CD4-positive, alpha-beta T cell (primary cell): ENCODE measurements at regions of chr15 and their contacts with region 1.

Region 1: GRCh38 chr15:69475769-69476358 is 23.2 kb downstream of the RPLP1 start:
- DNase-seq: peak; percentile 55 to 85 (median 70)
- ATAC-seq: peak; percentile 95
- H3K4me3 ChIP-seq: no peak overlapping the region
- H3K4me3 Mint-ChIP-seq: no peak overlapping the region
- H3K27ac ChIP-seq: no peak overlapping the region
- H3K27ac Mint-ChIP-seq: no peak overlapping the region
- H3K4me1 ChIP-seq: peaks cover 10% of the 10 kb centered on the region
- H3K4me1 Mint-ChIP-seq: peaks cover 3% of the 10 kb centered on the region
- H3K27me3 ChIP-seq: peaks cover 0 to 2% of the 10 kb centered on the region in 2 experiments
- H3K27me3 Mint-ChIP-seq: no peaks in the 10 kb centered on the region
- CTCF ChIP-seq: peak; percentile 97

Region 2: DNA sequence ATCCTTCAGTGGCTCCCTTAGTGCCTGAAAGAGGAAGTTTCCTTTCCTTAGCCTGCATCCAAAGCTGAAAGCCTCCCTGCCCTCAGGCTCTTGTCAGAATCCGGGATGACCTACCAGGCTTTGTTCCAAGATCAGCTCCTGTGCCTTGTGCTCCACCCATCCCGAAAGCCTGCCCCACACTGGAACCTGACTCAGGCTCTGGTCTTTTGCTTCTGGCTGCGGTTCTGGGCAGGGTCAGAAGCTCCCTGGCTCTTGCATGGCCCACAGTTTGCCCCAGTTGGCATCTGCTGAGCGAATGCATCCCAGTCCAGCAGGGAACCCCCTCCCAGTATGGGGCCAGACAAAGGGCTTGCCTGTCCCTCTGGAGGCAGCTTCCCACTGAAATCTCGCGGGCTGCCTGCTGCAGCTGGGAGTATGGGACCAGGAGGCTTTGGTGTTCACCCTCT is 87.6 kb before region 1 on chr15:
- CTCF ChIA-PET with region 1: no interaction called
- POLR2A ChIA-PET with region 1: no interaction called
- intact Hi-C with region 1: no loop called
- DNase-seq: no peak
- ATAC-seq: no peak
- H3K4me3 ChIP-seq: no peak overlapping the region
- H3K4me3 Mint-ChIP-seq: no peak overlapping the region
- H3K27ac ChIP-seq: no peak overlapping the region
- H3K27ac Mint-ChIP-seq: no peak overlapping the region
- H3K4me1 ChIP-seq: no peaks in the 10 kb centered on the region
- H3K4me1 Mint-ChIP-seq: no peaks in the 10 kb centered on the region
- H3K27me3 ChIP-seq: no peaks in the 10 kb centered on the region
- H3K27me3 Mint-ChIP-seq: no peaks in the 10 kb centered on the region
- CTCF ChIP-seq: no peak

Region 3: GRCh38 chr15:69443032-69443611 is 32.7 kb before region 1 on chr15:
- CTCF ChIA-PET with region 1: no interaction called
- POLR2A ChIA-PET with region 1: no interaction called
- intact Hi-C with region 1: no loop called
- DNase-seq: peak in 1 of 14 experiments; percentile 41
- ATAC-seq: no peak
- H3K4me3 ChIP-seq: no peak overlapping the region
- H3K4me3 Mint-ChIP-seq: no peak overlapping the region
- H3K27ac ChIP-seq: no peak overlapping the region
- H3K27ac Mint-ChIP-seq: no peak overlapping the region
- H3K4me1 ChIP-seq: peaks cover 5% of the 10 kb centered on the region
- H3K4me1 Mint-ChIP-seq: peaks cover 8% of the 10 kb centered on the region
- H3K27me3 ChIP-seq: no peaks in the 10 kb centered on the region
- H3K27me3 Mint-ChIP-seq: no peaks in the 10 kb centered on the region
- CTCF ChIP-seq: no peak

Region 4: DNA sequence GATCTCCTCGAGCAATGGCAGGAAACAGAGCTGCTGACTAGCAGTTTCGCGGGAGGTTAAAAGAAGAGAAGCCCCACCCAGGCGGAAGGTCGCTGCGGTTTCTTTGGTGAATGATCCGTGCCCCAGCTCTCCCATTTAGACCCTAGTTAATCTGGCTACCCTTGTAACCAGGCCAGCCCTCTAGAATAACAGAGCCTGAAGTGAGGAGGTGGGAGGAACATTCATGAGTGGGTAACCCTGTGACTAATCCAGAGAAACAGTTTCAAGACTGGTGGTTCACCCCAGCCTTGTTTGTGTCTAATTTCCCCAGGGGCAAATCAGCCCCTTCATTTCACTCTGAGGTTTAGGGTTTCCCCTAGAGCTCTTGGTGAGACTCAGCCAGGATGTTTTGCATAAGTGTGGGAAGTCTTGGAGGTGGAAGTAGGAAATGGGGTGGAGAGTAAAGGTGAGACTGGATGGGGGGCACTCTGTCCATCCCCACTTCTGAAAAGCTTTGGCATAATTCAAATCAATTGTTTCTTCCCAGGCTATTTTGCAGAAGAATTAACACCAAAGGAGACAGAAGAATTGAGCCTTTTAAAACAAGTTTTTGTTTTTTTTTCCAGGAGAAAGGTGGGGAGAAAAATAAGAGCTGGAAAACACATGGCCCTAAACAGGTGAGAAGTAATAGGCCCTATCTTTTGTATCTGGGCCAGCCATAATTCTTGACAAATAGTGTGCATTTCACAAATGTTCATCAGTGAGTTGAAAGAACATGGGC is 279.9 kb after region 1 on chr15:
- CTCF ChIA-PET with region 1: no interaction called
- POLR2A ChIA-PET with region 1: no interaction called
- intact Hi-C with region 1: loop called in 1 of 2 experiments (anchors 10 kb)
- DNase-seq: peak; percentile 29 to 88 (median 68)
- ATAC-seq: peak; percentile 57
- H3K4me3 ChIP-seq: peak overlapping the region; percentile 15
- H3K4me3 Mint-ChIP-seq: peak overlapping the region; percentile 73
- H3K27ac ChIP-seq: no peak overlapping the region
- H3K27ac Mint-ChIP-seq: peak overlapping the region; percentile 77
- H3K4me1 ChIP-seq: peaks cover 71% of the 10 kb centered on the region
- H3K4me1 Mint-ChIP-seq: peaks cover 94% of the 10 kb centered on the region
- H3K27me3 ChIP-seq: no peaks in the 10 kb centered on the region
- H3K27me3 Mint-ChIP-seq: peaks cover 6% of the 10 kb centered on the region
- CTCF ChIP-seq: no peak

Region 5: DNA sequence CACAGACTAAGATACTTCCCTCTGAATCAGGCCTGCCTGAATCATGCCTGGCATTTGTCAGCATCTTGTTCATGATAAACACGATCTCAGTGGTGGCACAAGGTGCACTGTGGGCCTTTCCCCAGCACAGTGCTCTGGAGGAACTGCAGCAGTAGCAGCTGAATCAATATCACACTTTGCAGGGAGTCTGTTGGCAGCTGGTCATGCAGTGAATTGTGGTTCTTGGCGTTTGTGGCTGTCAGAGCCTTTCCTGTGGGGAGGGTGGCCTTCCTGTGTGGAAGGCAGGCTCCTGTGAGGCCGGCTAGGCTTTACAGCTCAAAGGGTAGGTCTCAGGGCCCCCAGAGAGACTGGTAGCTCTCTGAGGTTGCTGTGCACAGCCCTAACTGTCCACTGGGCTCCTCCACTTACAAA is 676.2 kb after region 1 on chr15:
- CTCF ChIA-PET with region 1: no interaction called
- POLR2A ChIA-PET with region 1: no interaction called
- intact Hi-C with region 1: loop called in 1 of 2 experiments (anchors 5 kb)
- DNase-seq: peak in 2 of 14 experiments; percentile 26 to 47
- ATAC-seq: no peak
- H3K4me3 ChIP-seq: no peak overlapping the region
- H3K4me3 Mint-ChIP-seq: no peak overlapping the region
- H3K27ac ChIP-seq: no peak overlapping the region
- H3K27ac Mint-ChIP-seq: no peak overlapping the region
- H3K4me1 ChIP-seq: no peaks in the 10 kb centered on the region
- H3K4me1 Mint-ChIP-seq: no peaks in the 10 kb centered on the region
- H3K27me3 ChIP-seq: no peaks in the 10 kb centered on the region
- H3K27me3 Mint-ChIP-seq: no peaks in the 10 kb centered on the region
- CTCF ChIP-seq: no peak

Region 6: DNA sequence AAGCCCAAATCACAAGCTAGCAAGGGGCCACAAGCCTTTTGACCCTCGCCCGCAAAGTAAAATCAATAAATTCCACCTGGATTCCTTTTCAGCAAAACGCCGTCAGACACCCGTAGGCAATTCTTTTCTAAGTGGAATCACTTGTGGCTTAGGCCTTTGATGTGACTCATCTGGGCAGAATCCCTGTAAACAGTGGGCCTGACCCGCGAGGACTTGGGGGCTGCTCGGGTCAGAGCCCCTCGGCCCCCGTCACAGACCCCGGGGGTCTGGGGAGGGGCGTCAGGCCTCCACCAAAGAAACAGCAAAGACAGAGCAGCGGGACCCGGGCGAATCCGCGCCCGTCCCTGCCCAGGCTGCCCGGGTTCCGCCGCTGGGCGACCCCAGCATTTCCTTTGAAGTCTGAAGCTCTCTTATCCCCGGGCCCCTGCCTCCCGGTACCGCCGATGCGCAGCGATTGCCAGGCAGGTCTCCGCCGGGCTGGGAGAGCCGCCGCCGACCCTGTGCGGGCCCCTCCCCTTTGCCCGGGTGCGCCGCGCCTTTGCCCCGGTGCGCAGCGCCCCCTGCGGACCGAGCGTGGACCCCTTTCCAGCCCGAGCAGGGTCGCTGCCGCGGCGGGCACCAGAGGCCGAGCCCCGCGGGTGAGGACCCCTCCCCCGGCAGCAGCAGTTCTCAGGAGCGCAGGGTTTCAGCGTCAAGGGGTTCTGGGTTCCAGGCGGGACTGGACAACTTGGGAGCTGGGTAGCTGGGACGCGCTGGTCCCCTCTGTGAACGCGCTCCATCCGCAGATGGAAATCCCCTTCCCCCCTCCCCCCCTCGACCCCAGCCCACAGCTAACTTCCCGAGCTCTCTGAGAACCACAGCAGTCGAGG is 1109.2 kb after region 1 on chr15:
- CTCF ChIA-PET with region 1: no interaction called
- POLR2A ChIA-PET with region 1: no interaction called
- intact Hi-C with region 1: loop called in 1 of 2 experiments (anchors 5 kb)
- DNase-seq: peak; percentile 24 to 73 (median 46)
- ATAC-seq: peak; percentile 86
- H3K4me3 ChIP-seq: no peak overlapping the region
- H3K4me3 Mint-ChIP-seq: peak overlapping the region; percentile 68
- H3K27ac ChIP-seq: no peak overlapping the region
- H3K27ac Mint-ChIP-seq: no peak overlapping the region
- H3K4me1 ChIP-seq: peaks cover 16% of the 10 kb centered on the region
- H3K4me1 Mint-ChIP-seq: peaks cover 21% of the 10 kb centered on the region
- H3K27me3 ChIP-seq: peaks cover 0 to 5% of the 10 kb centered on the region in 2 experiments
- H3K27me3 Mint-ChIP-seq: peaks cover 15% of the 10 kb centered on the region
- CTCF ChIP-seq: peak; percentile 76

Region 7: GRCh38 chr15:70722266-70723121 is 1246.6 kb after region 1 on chr15:
- CTCF ChIA-PET with region 1: interaction called, 5 read pairs
- POLR2A ChIA-PET with region 1: no interaction called
- intact Hi-C with region 1: loop called (anchors 10 kb)
- DNase-seq: peak in 3 of 14 experiments; percentile 46 to 70 (median 58)
- ATAC-seq: no peak
- H3K4me3 ChIP-seq: no peak overlapping the region
- H3K4me3 Mint-ChIP-seq: no peak overlapping the region
- H3K27ac ChIP-seq: no peak overlapping the region
- H3K27ac Mint-ChIP-seq: no peak overlapping the region
- H3K4me1 ChIP-seq: no peaks in the 10 kb centered on the region
- H3K4me1 Mint-ChIP-seq: no peaks in the 10 kb centered on the region
- H3K27me3 ChIP-seq: peaks cover 3 to 20% of the 10 kb centered on the region in 2 experiments
- H3K27me3 Mint-ChIP-seq: peaks cover 19% of the 10 kb centered on the region
- CTCF ChIP-seq: peak; percentile 85

Region 8: DNA sequence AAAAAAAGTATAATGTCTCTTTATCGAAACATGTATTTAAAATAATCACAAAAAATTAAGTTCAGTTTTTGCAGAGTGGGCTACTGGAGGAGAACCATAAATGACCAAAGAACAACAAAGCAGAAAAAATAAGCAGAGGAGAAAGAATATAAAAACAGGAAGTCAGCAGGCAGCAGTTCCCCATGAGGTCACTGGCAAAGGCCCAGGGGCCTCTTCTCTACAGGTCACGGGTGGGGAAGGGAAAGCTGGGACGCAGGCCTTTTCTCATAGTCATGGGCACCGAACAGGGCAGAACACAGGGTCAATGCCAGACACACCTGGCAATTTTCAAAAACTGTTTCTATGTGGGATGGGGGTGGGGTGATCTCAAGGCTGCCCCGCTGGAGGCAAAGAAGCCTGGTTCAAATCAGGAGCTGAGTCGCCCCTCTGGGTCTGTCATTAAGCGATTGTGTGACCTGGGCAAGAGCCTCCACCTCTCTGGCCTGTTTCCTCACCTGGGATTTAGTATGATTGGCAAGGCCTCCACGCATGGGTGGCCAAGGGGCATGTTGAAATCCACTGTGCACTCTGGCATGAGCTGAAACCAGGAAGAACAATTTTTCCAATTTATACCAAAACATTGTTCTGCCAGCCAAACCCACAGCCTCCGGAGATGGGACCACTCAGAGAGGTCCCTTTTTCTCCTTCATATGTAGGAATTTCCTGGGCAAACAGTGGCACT is 1331.3 kb after region 1 on chr15:
- CTCF ChIA-PET with region 1: interaction called, 4 read pairs
- POLR2A ChIA-PET with region 1: no interaction called
- intact Hi-C with region 1: loop called (anchors 2 kb)
- DNase-seq: peak in 3 of 14 experiments; percentile 3 to 38 (median 19)
- ATAC-seq: no peak
- H3K4me3 ChIP-seq: no peak overlapping the region
- H3K4me3 Mint-ChIP-seq: no peak overlapping the region
- H3K27ac ChIP-seq: no peak overlapping the region
- H3K27ac Mint-ChIP-seq: no peak overlapping the region
- H3K4me1 ChIP-seq: no peaks in the 10 kb centered on the region
- H3K4me1 Mint-ChIP-seq: no peaks in the 10 kb centered on the region
- H3K27me3 ChIP-seq: peaks cover 3 to 4% of the 10 kb centered on the region in 2 experiments
- H3K27me3 Mint-ChIP-seq: peaks cover 13% of the 10 kb centered on the region
- CTCF ChIP-seq: no peak

Region 9: DNA sequence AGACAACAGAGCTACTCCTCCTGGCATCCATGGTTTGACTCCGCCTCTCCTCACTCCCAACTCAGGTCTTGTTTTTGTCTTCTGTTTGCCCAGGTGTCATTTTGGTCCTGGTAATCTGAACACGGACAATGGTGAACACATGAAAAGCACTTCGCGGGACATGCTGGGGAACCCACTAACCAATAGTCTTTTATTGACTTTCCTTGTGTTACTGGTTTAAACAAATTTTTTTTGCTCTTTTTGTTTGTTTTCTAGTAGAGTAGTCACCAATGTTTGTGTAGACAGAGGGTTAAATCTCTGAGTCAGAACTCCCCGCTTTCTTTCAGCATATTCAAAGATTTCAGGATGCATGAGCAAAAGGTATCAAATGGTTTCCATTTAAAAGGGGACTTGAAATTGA is 1339.8 kb after region 1 on chr15:
- CTCF ChIA-PET with region 1: interaction called, 4 read pairs
- POLR2A ChIA-PET with region 1: no interaction called
- intact Hi-C with region 1: loop called in 1 of 2 experiments (anchors 2 kb)
- DNase-seq: no peak
- ATAC-seq: no peak
- H3K4me3 ChIP-seq: no peak overlapping the region
- H3K4me3 Mint-ChIP-seq: no peak overlapping the region
- H3K27ac ChIP-seq: no peak overlapping the region
- H3K27ac Mint-ChIP-seq: no peak overlapping the region
- H3K4me1 ChIP-seq: no peaks in the 10 kb centered on the region
- H3K4me1 Mint-ChIP-seq: no peaks in the 10 kb centered on the region
- H3K27me3 ChIP-seq: peaks cover 3 to 4% of the 10 kb centered on the region in 2 experiments
- H3K27me3 Mint-ChIP-seq: peaks cover 6% of the 10 kb centered on the region
- CTCF ChIP-seq: no peak